ENCODE measurements at regions of chr9 and their contacts with region 1.

Region 1: DNA sequence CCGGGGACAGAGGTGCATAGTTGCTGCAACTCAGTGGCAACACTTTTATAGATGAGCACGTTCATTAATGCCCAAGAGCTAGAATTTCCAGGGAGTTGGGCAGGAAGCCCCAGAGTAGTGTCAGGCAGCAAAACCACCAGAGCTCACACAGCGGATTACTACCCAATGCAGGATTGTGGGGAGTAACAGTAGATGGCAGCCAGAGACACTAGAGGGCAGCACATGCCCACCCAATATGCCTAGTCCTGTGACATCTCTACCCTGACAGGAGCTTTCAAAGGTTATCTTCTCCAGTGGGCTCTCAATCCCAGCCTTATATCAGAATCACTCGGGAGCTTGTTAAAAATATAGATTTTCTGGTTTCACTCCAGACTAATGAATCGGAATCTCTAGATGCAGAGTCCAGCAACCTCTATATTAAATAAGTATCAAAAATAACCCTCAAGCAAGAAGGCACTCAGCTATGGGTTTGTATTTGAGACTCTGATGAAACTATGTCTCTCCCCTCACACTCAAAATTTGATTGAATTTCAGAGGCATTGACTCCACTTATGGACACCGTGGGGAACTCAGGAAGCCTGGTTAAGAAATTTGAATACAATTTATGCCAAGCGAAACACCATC is 58.4 kb upstream of the PHF24 start:
- DNase-seq: peak; percentile 66
- ATAC-seq: peak; percentile 99
- H3K4me3 Mint-ChIP-seq: no peak overlapping the region
- H3K27ac Mint-ChIP-seq: no peak overlapping the region
- H3K4me1 Mint-ChIP-seq: no peaks in the 10 kb centered on the region
- H3K27me3 Mint-ChIP-seq: peaks cover 22% of the 10 kb centered on the region
- CTCF ChIP-seq: peak; percentile 22

Region 2: GRCh38 chr9:35051069-35051967 is 151.7 kb after region 1 on chr9:
- CTCF ChIA-PET with region 1: interaction called, 93 read pairs
- POLR2A ChIA-PET with region 1: interaction called, 6 read pairs
- intact Hi-C with region 1: loop called (anchors 1 kb)
- DNase-seq: no peak
- ATAC-seq: peak; percentile 71
- H3K4me3 Mint-ChIP-seq: no peak overlapping the region
- H3K27ac Mint-ChIP-seq: no peak overlapping the region
- H3K4me1 Mint-ChIP-seq: peaks cover 5% of the 10 kb centered on the region
- H3K27me3 Mint-ChIP-seq: no peaks in the 10 kb centered on the region
- CTCF ChIP-seq: no peak

Region 3: DNA sequence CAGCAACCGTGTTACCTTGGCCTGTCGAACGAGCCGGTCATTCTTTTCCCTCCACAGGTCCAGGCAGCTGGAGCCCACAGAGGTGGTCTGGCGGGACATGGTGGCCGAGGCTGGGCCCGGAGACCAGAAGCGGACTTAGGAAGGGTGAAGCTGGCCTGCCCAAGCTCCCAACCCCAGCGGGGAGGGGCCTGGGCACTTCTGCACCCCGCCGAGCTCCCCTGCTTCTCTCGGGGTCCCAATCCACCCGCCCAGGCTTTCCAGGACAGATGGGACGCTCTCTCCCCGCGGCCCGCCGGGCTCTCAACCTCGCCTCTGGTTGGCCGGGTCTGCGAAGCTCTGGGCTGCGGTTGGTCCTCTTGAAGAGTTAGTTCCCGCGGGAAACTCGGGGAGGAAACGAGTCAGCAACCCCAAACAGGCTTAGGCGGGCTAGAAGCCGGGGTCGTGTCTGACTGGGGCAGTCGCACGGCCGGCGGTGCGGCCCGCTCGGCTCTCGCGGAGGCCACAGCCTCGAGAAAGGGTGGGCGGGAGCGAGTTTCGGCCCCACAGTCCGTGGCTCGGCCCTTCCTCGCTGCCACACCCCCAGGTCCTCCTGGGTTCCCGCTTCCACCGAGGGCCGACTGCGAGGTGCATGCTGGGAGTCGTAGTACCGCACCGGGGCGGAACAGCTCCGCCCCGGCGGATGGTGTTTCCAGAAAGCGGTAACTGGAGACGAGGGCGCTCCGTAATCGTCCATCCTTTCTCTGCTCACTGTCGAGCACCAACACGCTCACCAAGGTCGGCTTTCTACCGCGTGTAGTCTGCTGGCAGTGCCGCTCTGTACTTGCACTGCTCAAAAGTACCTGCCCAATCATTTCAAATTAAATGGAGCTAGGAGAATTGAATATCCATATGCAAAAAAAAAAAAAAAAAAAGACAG is 180.0 kb after region 1 on chr9 and contains the start of gene FANCG:
- CTCF ChIA-PET with region 1: interaction called, 11 read pairs
- POLR2A ChIA-PET with region 1: interaction called, 14 read pairs
- intact Hi-C with region 1: no loop called
- DNase-seq: peak; percentile 80
- ATAC-seq: peak; percentile 92
- H3K4me3 Mint-ChIP-seq: peak within 1 kb of the TSS; percentile 88
- H3K27ac Mint-ChIP-seq: peak within 1 kb of the TSS; percentile 74
- H3K4me1 Mint-ChIP-seq: peaks cover 22% of the 10 kb centered on the region
- H3K27me3 Mint-ChIP-seq: no peaks in the 10 kb centered on the region
- CTCF ChIP-seq: no peak
- total RNA-seq, gene FANCG: 27.4 and 28.8 TPM in 2 replicates

Region 4: GRCh38 chr9:35096035-35096849 is 196.6 kb after region 1 on chr9 and contains the start of gene PIGO:
- CTCF ChIA-PET with region 1: interaction called, 45 read pairs
- POLR2A ChIA-PET with region 1: interaction called, 6 read pairs
- intact Hi-C with region 1: loop called (anchors 1 kb)
- DNase-seq: peak; percentile 81
- ATAC-seq: peak; percentile 92
- H3K4me3 Mint-ChIP-seq: peak within 1 kb of the TSS; percentile 87
- H3K27ac Mint-ChIP-seq: peak within 1 kb of the TSS; percentile 93
- H3K4me1 Mint-ChIP-seq: peaks cover 30% of the 10 kb centered on the region
- H3K27me3 Mint-ChIP-seq: no peaks in the 10 kb centered on the region
- CTCF ChIP-seq: peak; percentile 60
- total RNA-seq, gene PIGO: 30.4 and 34.1 TPM in 2 replicates

Region 5: DNA sequence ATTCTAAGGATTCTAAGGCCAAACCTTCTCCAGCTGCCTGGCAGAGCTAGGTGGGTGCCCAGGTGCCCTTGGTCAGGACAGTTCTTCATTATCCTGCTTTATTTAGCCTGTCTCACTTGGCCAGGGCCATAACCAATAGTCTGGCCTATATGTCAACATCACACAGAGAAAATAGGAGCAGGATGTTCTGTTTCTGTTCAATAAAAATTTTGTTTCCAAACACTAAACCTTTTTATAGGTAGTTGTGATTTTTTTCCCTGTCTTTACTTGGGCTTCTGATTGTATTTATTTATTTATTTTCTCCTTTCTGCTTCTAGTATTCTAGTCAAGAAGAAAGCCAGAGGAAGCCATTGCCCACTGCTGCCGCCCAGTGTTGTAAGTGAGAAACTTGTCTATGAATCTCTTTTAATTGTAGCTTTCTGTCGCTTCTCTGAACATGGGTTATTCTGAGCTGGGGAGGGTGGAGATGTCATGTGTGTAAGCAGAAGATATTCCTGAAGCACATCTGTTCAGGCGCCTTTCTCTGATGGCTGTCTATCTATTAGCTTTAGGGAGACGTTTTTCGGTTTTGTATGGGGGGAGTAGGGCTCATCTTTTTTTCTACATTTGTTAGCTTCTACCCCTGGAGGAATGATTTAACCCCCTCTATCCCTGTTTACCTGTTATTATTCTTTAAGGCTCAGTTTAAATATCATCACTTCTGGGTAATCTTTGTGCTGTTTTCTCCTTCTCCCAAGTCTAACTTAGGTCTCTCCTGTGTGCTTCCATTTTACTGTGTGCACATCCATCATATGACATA is 359.2 kb after region 1 on chr9:
- CTCF ChIA-PET with region 1: interaction called, 13 read pairs
- POLR2A ChIA-PET with region 1: no interaction called
- intact Hi-C with region 1: loop called (anchors 1 kb)
- DNase-seq: no peak
- ATAC-seq: peak; percentile 34
- H3K4me3 Mint-ChIP-seq: no peak overlapping the region
- H3K27ac Mint-ChIP-seq: no peak overlapping the region
- H3K4me1 Mint-ChIP-seq: no peaks in the 10 kb centered on the region
- H3K27me3 Mint-ChIP-seq: peaks cover under 1% of the 10 kb centered on the region
- CTCF ChIP-seq: no peak

Region 6: DNA sequence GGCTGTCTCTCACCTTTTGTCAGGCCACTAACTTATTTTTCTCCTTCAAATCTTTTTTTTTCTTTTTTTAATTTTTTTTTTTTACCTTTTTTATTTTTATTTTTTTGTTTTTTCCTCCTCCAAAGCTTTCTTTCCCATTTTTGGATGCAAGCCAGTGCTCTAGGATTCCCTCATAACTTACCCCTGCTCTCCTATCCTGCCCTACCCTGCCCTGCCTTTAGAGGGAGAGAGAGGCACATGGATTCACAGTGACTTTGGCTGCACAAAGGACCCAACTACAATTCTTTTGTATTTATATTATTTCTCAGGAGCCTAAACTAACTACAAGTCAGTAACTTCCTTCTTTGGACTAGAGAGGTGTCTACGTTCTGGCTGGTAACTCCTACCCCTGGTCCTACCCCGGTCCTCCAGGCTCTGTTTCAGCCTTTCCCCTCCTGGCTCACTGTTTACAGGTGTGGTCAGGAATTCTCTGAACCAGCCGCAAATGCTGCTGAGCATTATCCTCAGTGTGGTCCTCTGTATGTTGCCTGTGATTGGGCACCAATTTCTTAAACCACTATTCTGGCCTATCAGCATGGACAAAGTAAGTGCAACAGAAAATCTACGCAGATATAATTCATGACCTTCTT is 581.8 kb after region 1 on chr9:
- CTCF ChIA-PET with region 1: interaction called, 42 read pairs
- POLR2A ChIA-PET with region 1: no interaction called
- intact Hi-C with region 1: loop called (anchors 1 kb)
- DNase-seq: no peak
- ATAC-seq: peak; percentile 66
- H3K4me3 Mint-ChIP-seq: no peak overlapping the region
- H3K27ac Mint-ChIP-seq: no peak overlapping the region
- H3K4me1 Mint-ChIP-seq: no peaks in the 10 kb centered on the region
- H3K27me3 Mint-ChIP-seq: peaks cover 10% of the 10 kb centered on the region
- CTCF ChIP-seq: no peak

Region 7: DNA sequence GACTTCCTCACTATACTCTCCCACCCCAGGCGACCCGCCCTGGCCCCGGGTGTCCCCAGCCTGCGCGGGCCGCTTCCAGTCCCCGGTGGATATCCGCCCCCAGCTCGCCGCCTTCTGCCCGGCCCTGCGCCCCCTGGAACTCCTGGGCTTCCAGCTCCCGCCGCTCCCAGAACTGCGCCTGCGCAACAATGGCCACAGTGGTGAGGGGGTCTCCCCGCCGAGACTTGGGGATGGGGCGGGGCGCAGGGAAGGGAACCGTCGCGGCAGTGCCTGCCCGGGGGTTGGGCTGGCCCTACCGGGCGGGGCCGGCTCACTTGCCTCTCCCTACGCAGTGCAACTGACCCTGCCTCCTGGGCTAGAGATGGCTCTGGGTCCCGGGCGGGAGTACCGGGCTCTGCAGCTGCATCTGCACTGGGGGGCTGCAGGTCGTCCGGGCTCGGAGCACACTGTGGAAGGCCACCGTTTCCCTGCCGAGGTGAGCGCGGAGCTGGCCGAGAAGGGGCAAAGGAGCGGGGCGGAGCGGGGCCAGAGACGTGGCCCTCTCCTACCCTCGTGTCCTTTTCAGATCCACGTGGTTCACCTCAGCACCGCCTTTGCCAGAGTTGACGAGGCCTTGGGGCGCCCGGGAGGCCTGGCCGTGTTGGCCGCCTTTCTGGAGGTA is 776.2 kb after region 1 on chr9:
- CTCF ChIA-PET with region 1: no interaction called
- POLR2A ChIA-PET with region 1: no interaction called
- intact Hi-C with region 1: no loop called
- DNase-seq: peak; percentile 47
- ATAC-seq: peak; percentile 74
- H3K4me3 Mint-ChIP-seq: peak overlapping the region; percentile 75
- H3K27ac Mint-ChIP-seq: no peak overlapping the region
- H3K4me1 Mint-ChIP-seq: peaks cover 31% of the 10 kb centered on the region
- H3K27me3 Mint-ChIP-seq: peaks cover 8% of the 10 kb centered on the region
- CTCF ChIP-seq: no peak

Measured in activated B cell treated with CpG ODN at 0.5 μM for 24 hours (primary cell).